Left cardiac atrium (tissue), 4 donors: ENCODE measurements at regions of chr3 and their contacts with region 1.

Region 1: DNA sequence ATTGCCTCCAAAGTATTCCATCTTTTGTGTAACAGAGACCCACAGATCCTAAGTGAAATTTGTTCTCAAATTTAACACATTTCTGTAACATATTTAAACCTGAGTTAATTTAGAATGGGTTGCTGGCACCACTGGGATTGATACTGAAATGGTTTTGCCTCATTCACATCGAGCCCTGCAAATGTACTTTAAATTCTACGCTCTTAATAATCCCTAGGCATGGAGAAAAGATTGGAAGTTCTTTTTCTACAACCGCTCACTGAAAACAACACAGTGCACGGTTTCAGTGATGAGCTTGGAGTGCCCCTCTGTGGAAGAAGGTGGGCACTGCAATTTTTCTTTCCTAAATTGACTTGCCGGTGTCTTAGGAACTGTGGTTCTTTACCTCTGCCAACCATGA is 109.9 kb upstream of the ATP11B start:
- DNase-seq: peak; percentile 40
- ATAC-seq: peak; percentile 86 to 89

Region 2: DNA sequence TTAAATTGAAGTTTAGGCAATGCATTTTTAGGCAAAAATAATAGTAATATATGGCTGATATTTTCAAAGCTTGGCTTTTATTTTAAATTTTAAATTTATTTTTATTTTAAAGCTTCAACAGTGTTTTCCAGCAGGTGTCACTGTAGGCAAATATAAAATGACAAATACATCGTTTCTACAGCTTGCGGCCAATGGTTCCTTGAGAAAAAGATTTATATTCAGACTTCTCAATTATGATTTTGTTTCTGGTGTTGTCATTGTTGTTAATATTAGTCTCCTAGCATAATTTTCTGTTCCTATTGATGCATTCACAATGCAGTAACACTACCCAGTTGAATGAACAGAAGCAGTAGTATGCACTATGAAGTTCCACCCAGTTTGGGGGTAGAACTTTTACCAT is 1473.2 kb before region 1 on chr3:
- intact Hi-C with region 1: loop called in 1 of 2 experiments (anchors 10 kb)
- DNase-seq: no peak
- ATAC-seq: no peak

Region 3: DNA sequence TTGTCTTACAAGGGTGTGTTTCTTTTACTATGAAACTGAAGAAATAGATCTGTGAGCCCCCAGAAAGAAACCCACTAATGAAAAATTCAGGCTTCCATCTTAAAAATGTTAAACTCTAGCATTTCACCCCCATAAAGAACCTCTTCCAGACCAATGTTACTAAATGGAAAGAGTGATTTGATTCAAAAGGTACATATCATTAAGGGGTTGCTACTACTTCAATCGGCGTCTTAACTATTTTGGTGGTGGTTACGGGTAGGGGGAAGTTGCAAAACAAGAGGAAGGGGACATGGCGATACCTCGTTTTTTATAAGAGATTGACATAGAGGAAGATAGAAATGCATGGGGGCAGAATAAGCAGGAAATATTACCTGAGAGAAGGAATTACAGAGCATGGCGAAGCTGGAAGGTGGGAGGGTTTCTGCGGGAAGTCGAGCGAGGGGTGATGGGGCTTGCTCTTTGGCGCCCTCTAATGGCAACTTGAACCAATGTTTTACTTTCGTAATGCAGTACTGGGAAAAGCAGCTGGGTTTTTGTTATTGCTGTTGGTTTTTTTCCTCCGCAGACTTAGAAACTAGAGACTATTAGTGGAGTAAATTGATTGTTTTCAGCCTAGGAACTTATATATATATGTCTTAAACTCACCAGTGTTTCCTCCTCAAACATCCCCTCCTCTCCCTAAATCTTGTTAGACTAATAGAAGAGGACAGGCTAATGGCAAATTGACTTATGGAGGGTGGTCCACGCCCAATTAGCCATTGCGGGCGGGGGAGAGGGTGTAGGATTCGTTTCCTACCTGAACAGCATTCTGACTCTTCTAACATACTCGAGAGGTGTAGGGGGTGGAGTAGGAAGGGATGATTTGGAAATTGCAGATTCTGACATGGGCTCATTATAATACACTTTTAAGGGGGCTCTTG is 983.0 kb before region 1 on chr3:
- intact Hi-C with region 1: loop called in 1 of 2 experiments (anchors 10 kb)
- DNase-seq: peak; percentile 48
- ATAC-seq: peak; percentile 75 to 81

Region 4: GRCh38 chr3:181709537-181710279 is 973.7 kb before region 1 on chr3:
- intact Hi-C with region 1: loop called (anchors 2 to 10 kb)
- DNase-seq: peak; percentile 77
- ATAC-seq: no peak